Mammary epithelial cell (primary cell): ENCODE measurements at regions of chr1 and their contacts with region 1.

Region 1: GRCh38 chr1:15323351-15323988 is 76.4 kb downstream of the FHAD1 start:
- DNase-seq: peak; percentile 55
- H3K4me3 ChIP-seq: no peak overlapping the region
- H3K27ac ChIP-seq: no peak overlapping the region
- H3K4me1 ChIP-seq: no peaks in the 10 kb centered on the region
- H3K27me3 ChIP-seq: no peaks in the 10 kb centered on the region
- CTCF ChIP-seq: peak; percentile 97 to 98

Region 2: GRCh38 chr1:15236321-15236721 is 87.1 kb before region 1 on chr1:
- CTCF ChIA-PET with region 1: no interaction called
- dilution Hi-C with region 1: loop called (anchors 5 kb)
- in situ Hi-C with region 1: no loop called
- intact Hi-C with region 1: no loop called
- DNase-seq: no peak
- H3K4me3 ChIP-seq: no peak overlapping the region
- H3K27ac ChIP-seq: no peak overlapping the region
- H3K4me1 ChIP-seq: no peaks in the 10 kb centered on the region
- H3K27me3 ChIP-seq: no peaks in the 10 kb centered on the region
- CTCF ChIP-seq: no peak

Region 3: GRCh38 chr1:15364740-15365139 is 41.3 kb after region 1 on chr1:
- CTCF ChIA-PET with region 1: no interaction called
- dilution Hi-C with region 1: no loop called
- in situ Hi-C with region 1: no loop called
- intact Hi-C with region 1: loop called (anchors 1 kb)
- DNase-seq: no peak
- H3K4me3 ChIP-seq: no peak overlapping the region
- H3K27ac ChIP-seq: no peak overlapping the region
- H3K4me1 ChIP-seq: peaks cover 6% of the 10 kb centered on the region
- H3K27me3 ChIP-seq: no peaks in the 10 kb centered on the region
- CTCF ChIP-seq: peak in 1 of 2 donors; percentile 31

Region 4: GRCh38 chr1:15430787-15431570 is 107.5 kb after region 1 on chr1:
- CTCF ChIA-PET with region 1: interaction called, 6 read pairs
- dilution Hi-C with region 1: no loop called
- in situ Hi-C with region 1: loop called (anchors 5 kb)
- intact Hi-C with region 1: loop called (anchors 1 kb)
- DNase-seq: no peak
- H3K4me3 ChIP-seq: no peak overlapping the region
- H3K27ac ChIP-seq: no peak overlapping the region
- H3K4me1 ChIP-seq: peaks cover 15% of the 10 kb centered on the region
- H3K27me3 ChIP-seq: no peaks in the 10 kb centered on the region
- CTCF ChIP-seq: peak; percentile 94 to 95

Region 5: GRCh38 chr1:15444468-15445389 is 121.3 kb after region 1 on chr1:
- CTCF ChIA-PET with region 1: no interaction called
- dilution Hi-C with region 1: loop called (anchors 5 kb)
- in situ Hi-C with region 1: no loop called
- intact Hi-C with region 1: no loop called
- DNase-seq: no peak
- H3K4me3 ChIP-seq: no peak overlapping the region
- H3K27ac ChIP-seq: no peak overlapping the region
- H3K4me1 ChIP-seq: no peaks in the 10 kb centered on the region
- H3K27me3 ChIP-seq: no peaks in the 10 kb centered on the region
- CTCF ChIP-seq: no peak

Region 6: DNA sequence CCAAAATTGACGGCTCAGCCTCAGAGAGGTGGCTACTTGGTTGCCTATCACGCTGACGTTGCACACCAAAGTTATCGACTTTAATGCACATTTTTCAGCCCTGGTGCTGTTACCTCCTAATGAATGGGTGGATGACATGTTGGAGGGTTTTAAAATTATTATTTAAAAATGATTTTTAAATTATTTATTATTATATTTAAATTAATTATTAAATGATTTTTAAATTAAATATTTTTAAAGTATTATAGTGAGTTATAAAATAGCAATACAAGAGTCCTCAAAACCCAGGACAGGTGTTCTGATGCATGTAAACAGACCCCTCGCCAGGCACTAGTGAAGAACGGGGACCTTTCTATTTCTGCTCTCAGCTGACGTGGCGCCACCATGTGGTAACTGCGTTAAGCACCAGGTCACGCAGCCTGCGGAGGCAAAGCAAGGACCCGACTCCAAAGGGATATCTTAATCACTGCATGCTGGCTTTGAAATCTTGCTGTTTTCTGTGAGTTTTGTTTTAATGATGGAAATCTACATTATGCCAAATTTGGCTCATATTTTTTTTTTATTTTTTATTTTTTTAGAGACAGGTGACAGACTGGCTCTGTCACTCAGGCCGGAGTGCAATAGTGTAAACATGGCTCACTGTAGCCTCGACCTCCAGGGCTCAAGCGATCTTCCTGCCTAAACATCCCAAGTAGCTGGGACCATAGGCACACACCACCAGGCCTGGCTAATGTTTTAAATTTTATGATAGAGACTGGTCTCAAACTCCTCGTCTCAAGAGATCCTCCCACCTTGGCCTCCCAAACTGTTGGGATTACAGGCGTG is 177.9 kb after region 1 on chr1:
- CTCF ChIA-PET with region 1: no interaction called
- dilution Hi-C with region 1: no loop called
- in situ Hi-C with region 1: no loop called
- intact Hi-C with region 1: loop called (anchors 1 kb)
- DNase-seq: peak; percentile 12
- H3K4me3 ChIP-seq: no peak overlapping the region
- H3K27ac ChIP-seq: no peak overlapping the region
- H3K4me1 ChIP-seq: no peaks in the 10 kb centered on the region
- H3K27me3 ChIP-seq: no peaks in the 10 kb centered on the region
- CTCF ChIP-seq: peak; percentile 76 to 85

Region 7: DNA sequence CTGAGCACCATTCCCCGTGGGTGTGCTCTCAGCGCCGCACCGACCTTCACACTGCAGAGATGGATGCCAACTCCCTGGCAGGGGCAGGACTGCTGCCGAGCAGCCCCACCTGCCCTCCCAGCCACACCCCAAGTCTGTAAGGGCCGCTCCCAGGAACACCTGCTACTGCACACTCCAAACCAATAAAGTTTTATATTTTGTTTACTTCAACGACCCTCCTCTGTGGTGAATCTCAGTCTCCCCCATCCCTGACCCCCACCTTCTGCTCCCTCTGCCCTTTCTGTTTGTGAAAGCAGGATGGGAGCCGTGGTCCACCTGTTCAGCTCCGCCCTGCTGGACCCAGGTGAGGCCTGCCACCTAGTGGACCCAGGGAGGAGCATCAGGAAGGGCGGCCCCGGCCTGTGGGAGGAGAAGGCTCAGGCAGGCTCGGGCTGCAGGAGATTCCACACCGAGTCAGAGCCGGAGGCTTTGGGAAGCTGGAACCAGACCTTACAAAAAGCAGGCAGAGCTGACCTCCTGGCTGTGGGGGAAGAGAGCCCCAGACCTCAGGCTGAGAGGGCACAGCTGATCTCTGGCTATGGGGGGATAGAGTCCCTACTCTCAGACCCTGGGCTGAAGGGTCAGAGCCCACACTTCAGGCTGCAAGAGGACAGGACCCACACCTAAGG is 417.8 kb after region 1 on chr1:
- CTCF ChIA-PET with region 1: no interaction called
- dilution Hi-C with region 1: no loop called
- in situ Hi-C with region 1: no loop called
- intact Hi-C with region 1: loop called (anchors 5 kb)
- DNase-seq: peak; percentile 73
- H3K4me3 ChIP-seq: no peak overlapping the region
- H3K27ac ChIP-seq: no peak overlapping the region
- H3K4me1 ChIP-seq: peaks cover 3% of the 10 kb centered on the region
- H3K27me3 ChIP-seq: no peaks in the 10 kb centered on the region
- CTCF ChIP-seq: peak; percentile 81 to 98